Panc1 (cell line): ENCODE measurements at regions of chr6 and their contacts with region 1.

Region 1: DNA sequence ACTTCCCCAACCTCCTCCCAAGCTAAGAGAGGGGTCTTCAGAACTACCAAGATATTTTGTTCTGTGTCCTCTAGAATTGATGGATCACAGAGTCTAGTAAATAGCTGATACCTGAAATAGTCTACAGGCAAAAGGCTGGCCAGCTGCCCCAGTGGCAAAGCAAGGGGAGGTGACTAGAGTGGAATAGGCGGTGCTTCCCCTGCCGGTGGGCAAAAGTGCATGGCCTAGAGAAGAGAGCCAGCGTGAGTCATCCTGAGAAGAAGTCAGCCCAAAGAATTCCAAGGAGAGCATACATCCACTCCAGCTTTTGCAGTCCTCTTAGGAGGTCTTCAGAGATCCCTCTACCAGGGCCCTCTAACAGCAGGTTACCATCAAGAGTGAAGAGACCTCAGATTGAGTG is 14.7 kb downstream of the DPPA5 start:
- DNase-seq: no peak
- ATAC-seq: peak; percentile 70
- H3K4me3 ChIP-seq: no peak overlapping the region
- H3K27ac ChIP-seq: no peak overlapping the region
- H3K4me1 ChIP-seq: no peaks in the 10 kb centered on the region
- H3K27me3 ChIP-seq: peaks cover 2% of the 10 kb centered on the region; the same call in 1 of the 2 replicates
- CTCF ChIP-seq: no peak

Region 2: DNA sequence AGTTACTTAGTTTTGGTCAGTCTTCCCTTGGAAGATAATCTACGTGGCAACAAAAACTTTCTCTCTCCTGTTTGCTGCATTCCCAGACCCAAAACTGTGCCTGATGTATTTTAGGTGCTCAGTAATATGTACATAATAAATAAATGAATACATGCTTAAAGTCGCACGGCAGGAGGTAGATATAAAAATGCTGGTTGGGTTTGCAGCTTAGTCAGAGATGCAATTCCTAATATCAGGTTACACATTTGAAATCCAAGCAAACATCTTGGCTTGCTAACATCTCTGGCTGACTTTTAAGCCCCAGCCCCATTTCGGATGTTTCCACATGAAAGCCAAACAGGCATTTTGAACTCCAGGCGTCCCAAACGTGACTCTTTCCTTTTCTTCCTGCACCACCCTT is 626.4 kb before region 1 on chr6:
- CTCF ChIA-PET with region 1: no interaction called
- POLR2A ChIA-PET with region 1: no interaction called
- in situ Hi-C with region 1: no loop called
- intact Hi-C with region 1: no loop called
- DNase-seq: no peak
- ATAC-seq: no peak
- H3K4me3 ChIP-seq: no peak overlapping the region
- H3K27ac ChIP-seq: no peak overlapping the region
- H3K4me1 ChIP-seq: peaks cover 3% of the 10 kb centered on the region; the same call in 1 of the 2 replicates
- H3K27me3 ChIP-seq: no peaks in the 10 kb centered on the region
- CTCF ChIP-seq: no peak

Region 3: GRCh38 chr6:73394577-73395354 is 55.4 kb after region 1 on chr6 and contains the start of gene DDX43:
- CTCF ChIA-PET with region 1: no interaction called
- POLR2A ChIA-PET with region 1: interaction called, 10 read pairs
- in situ Hi-C with region 1: no loop called
- intact Hi-C with region 1: no loop called
- DNase-seq: peak; percentile 98
- ATAC-seq: peak; percentile 96
- H3K4me3 ChIP-seq: peak within 1 kb of the TSS; percentile 62 to 78
- H3K27ac ChIP-seq: peak within 1 kb of the TSS; percentile 90
- H3K4me1 ChIP-seq: peaks cover 14% of the 10 kb centered on the region
- H3K27me3 ChIP-seq: no peaks in the 10 kb centered on the region
- CTCF ChIP-seq: no peak
- total RNA-seq, gene DDX43: 24.9 TPM